ENCODE measurements at regions of chr10 and their contacts with region 1.

Region 1: DNA sequence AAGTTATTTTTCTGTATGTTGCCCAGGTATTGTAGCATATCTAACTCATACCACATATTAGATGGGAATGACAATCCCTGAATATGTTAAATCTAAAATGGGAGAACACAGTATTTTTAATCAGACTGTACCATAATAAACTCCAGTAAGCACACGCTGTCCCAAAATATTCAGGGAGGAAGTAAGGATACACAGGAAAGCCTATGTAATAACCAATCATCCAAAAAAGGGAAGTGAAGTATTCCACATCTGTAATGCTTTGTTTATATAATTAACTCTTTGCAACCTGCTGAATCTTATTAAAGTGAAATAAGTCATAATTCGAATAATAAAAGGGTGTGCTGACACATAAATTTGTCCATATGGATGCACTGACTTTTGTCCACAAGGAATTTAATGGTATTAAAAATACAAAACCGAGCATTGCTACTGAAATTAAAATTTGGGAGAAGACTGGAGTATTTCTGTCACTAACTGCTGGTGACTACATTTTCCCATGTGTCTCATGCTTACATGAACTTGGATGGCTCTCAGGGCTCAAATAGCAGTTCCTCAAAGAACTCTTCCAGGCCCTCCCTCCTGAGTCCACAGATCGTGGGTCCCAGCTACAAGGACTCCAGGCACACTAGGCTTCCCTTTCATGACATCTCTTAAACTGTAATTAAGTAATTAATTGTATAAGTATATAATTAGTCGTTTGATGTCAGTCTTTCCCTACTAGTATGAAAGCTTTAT is 120.6 kb downstream of the NEBL start:
- DNase-seq: no peak
- ATAC-seq: no peak
- H3K4me3 ChIP-seq: no peak overlapping the region
- H3K27ac ChIP-seq: peak overlapping the region in 1 of 12 donors; percentile 31
- H3K4me1 ChIP-seq: peaks cover 0 to 13% (median 3%) of the 10 kb centered on the region in 12 donors
- H3K27me3 ChIP-seq: no peaks in the 10 kb centered on the region
- CTCF ChIP-seq: no peak
- POLR2A ChIP-seq: no peak

Region 2: DNA sequence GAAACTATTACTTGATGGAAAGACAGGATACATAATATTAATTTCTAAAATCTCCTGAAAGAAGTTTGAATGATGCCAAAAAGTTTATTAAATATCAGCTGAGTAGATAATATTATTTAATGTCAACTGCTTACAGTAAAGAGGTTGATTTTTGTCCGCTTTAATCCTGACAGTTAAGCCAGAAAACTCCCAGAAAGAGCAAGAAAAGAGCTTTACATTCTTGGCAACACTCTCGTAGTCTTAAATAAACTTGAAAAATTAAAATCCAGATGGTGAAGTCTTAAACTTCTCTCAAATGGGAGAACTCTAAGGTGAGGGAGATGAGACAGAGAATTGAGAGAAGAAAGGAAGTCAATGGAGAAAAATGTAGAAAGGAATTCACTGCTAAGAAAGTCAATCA is 1159.6 kb before region 1 on chr10:
- intact Hi-C with region 1: loop called in 1 of 10 experiments (anchors 10 kb)
- DNase-seq: no peak
- ATAC-seq: no peak
- H3K4me3 ChIP-seq: no peak overlapping the region
- H3K27ac ChIP-seq: no peak overlapping the region
- H3K4me1 ChIP-seq: no peaks in the 10 kb centered on the region
- H3K27me3 ChIP-seq: no peaks in the 10 kb centered on the region
- CTCF ChIP-seq: no peak
- POLR2A ChIP-seq: no peak

Region 3: GRCh38 chr10:20885678-20886077 is 109.1 kb after region 1 on chr10:
- intact Hi-C with region 1: no loop called
- DNase-seq: no peak
- ATAC-seq: peak; percentile 74 to 83 (median 83)
- H3K4me3 ChIP-seq: peak overlapping the region in 3 of 12 donors; percentile 2 to 21 (median 8)
- H3K27ac ChIP-seq: peak overlapping the region in 10 of 12 donors; percentile 48 to 76 (median 58)
- H3K4me1 ChIP-seq: peaks cover 0 to 33% (median 1%) of the 10 kb centered on the region in 12 donors
- H3K27me3 ChIP-seq: no peaks in the 10 kb centered on the region
- CTCF ChIP-seq: no peak
- POLR2A ChIP-seq: no peak

Region 4: GRCh38 chr10:21184216-21184615 is 407.7 kb after region 1 on chr10:
- intact Hi-C with region 1: no loop called
- DNase-seq: no peak
- ATAC-seq: peak in 1 of 4 donors; percentile 33
- H3K4me3 ChIP-seq: no peak overlapping the region
- H3K27ac ChIP-seq: peak overlapping the region in 1 of 12 donors; percentile 22
- H3K4me1 ChIP-seq: peaks cover 0 to 4% (median 0%) of the 10 kb centered on the region in 12 donors
- H3K27me3 ChIP-seq: no peaks in the 10 kb centered on the region
- CTCF ChIP-seq: no peak
- POLR2A ChIP-seq: no peak